Activated CD4-positive, alpha-beta T cell treated with anti-CD3 and anti-CD28 coated beads for 36 hours (primary cell): ENCODE measurements at regions of chr10 and their contacts with region 1.

Region 1: GRCh38 chr10:17643755-17644484 is at the start of gene STAM:
- DNase-seq: peak; percentile 96
- ATAC-seq: peak; percentile 80
- H3K4me3 Mint-ChIP-seq: peak within 1 kb of the TSS; percentile 92
- H3K27ac Mint-ChIP-seq: peak within 1 kb of the TSS; percentile 99
- H3K4me1 Mint-ChIP-seq: peaks cover 49% of the 10 kb centered on the region
- H3K27me3 Mint-ChIP-seq: no peaks in the 10 kb centered on the region
- total RNA-seq, gene STAM: 17.9 to 23.8 TPM

Region 2: GRCh38 chr10:16817125-16818019 is 826.5 kb before region 1 on chr10 and contains the start of gene RSU1:
- CTCF ChIA-PET with region 1: no interaction called
- POLR2A ChIA-PET with region 1: interaction called, 4 read pairs
- intact Hi-C with region 1: loop called in 1 of 2 experiments (anchors 2 kb)
- DNase-seq: peak; percentile 100
- ATAC-seq: peak; percentile 99
- H3K4me3 Mint-ChIP-seq: peak within 1 kb of the TSS; percentile 87
- H3K27ac Mint-ChIP-seq: peak within 1 kb of the TSS; percentile 95
- H3K4me1 Mint-ChIP-seq: peaks cover 27% of the 10 kb centered on the region
- H3K27me3 Mint-ChIP-seq: no peaks in the 10 kb centered on the region
- total RNA-seq, gene RSU1: 38.4 to 62.8 TPM

Region 3: GRCh38 chr10:17200912-17201793 is 442.8 kb before region 1 on chr10 and contains the start of gene TRDMT1:
- CTCF ChIA-PET with region 1: no interaction called
- POLR2A ChIA-PET with region 1: interaction called, 4 read pairs
- intact Hi-C with region 1: loop called in 1 of 2 experiments (anchors 10 kb)
- DNase-seq: peak; percentile 85
- ATAC-seq: peak; percentile 91
- H3K4me3 Mint-ChIP-seq: peak within 1 kb of the TSS; percentile 86
- H3K27ac Mint-ChIP-seq: peak within 1 kb of the TSS; percentile 89
- H3K4me1 Mint-ChIP-seq: peaks cover 46% of the 10 kb centered on the region
- H3K27me3 Mint-ChIP-seq: no peaks in the 10 kb centered on the region
- total RNA-seq, gene TRDMT1: 6.6 to 11.6 TPM

Region 4: GRCh38 chr10:17655567-17656146 is 11.7 kb after region 1 on chr10:
- CTCF ChIA-PET with region 1: interaction called, 3 read pairs
- POLR2A ChIA-PET with region 1: interaction called, 3 read pairs
- intact Hi-C with region 1: loop called (anchors 1 kb)
- DNase-seq: no peak
- ATAC-seq: peak; percentile 42
- H3K4me3 Mint-ChIP-seq: no peak overlapping the region
- H3K27ac Mint-ChIP-seq: peak overlapping the region; percentile 25
- H3K4me1 Mint-ChIP-seq: peaks cover 71% of the 10 kb centered on the region
- H3K27me3 Mint-ChIP-seq: no peaks in the 10 kb centered on the region

Region 5: DNA sequence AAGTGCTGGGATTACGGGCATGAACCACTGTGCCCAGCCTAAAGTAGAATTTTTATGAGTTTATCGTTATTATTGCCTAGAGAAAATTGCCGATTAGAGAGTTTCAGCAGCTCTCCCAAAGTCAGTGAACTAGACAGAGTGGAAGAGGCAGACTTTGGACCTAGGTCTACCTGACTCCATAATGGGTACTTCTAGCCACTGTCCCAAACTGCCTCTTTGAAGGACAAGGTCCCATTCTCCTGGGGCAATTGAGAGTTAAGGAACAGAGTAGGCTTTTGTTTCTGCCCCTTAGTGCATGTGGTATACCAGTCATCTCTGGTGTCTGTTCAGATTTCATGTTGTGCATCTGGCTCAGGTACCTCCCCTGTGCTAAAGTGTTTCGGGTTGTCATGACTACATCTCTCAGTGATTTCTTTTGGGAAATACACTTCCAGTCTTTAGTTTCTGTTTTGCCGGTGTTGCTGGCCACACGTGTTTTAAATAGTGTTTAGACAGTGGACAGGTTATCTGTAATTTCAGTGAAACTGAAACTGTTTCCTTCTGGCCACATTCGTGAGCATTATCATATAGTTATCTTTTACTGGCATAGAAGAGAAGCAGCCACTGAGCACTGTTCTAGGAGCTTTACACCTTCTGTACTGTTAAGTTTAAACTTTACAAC is 112.8 kb after region 1 on chr10:
- CTCF ChIA-PET with region 1: no interaction called
- POLR2A ChIA-PET with region 1: no interaction called
- intact Hi-C with region 1: no loop called
- DNase-seq: no peak
- ATAC-seq: peak; percentile 68
- H3K4me3 Mint-ChIP-seq: no peak overlapping the region
- H3K27ac Mint-ChIP-seq: no peak overlapping the region
- H3K4me1 Mint-ChIP-seq: peaks cover 5% of the 10 kb centered on the region
- H3K27me3 Mint-ChIP-seq: no peaks in the 10 kb centered on the region

Region 6: GRCh38 chr10:17918187-17918903 is 274.4 kb after region 1 on chr10:
- CTCF ChIA-PET with region 1: no interaction called
- POLR2A ChIA-PET with region 1: no interaction called
- intact Hi-C with region 1: no loop called
- DNase-seq: no peak
- ATAC-seq: no peak
- H3K4me3 Mint-ChIP-seq: no peak overlapping the region
- H3K27ac Mint-ChIP-seq: no peak overlapping the region
- H3K4me1 Mint-ChIP-seq: no peaks in the 10 kb centered on the region
- H3K27me3 Mint-ChIP-seq: no peaks in the 10 kb centered on the region

Region 7: GRCh38 chr10:18651324-18652007 is 1007.5 kb after region 1 on chr10 and contains the start of gene NSUN6:
- CTCF ChIA-PET with region 1: no interaction called
- POLR2A ChIA-PET with region 1: no interaction called
- intact Hi-C with region 1: loop called (anchors 5 kb)
- DNase-seq: peak; percentile 95
- ATAC-seq: peak; percentile 91
- H3K4me3 Mint-ChIP-seq: peak within 1 kb of the TSS; percentile 97
- H3K27ac Mint-ChIP-seq: peak within 1 kb of the TSS; percentile 93
- H3K4me1 Mint-ChIP-seq: peaks cover 29% of the 10 kb centered on the region
- H3K27me3 Mint-ChIP-seq: no peaks in the 10 kb centered on the region
- total RNA-seq, gene NSUN6: 15.7 to 16.0 TPM